H1 (cell line): ENCODE measurements at regions of chr4 and their contacts with region 1.

Region 1: DNA sequence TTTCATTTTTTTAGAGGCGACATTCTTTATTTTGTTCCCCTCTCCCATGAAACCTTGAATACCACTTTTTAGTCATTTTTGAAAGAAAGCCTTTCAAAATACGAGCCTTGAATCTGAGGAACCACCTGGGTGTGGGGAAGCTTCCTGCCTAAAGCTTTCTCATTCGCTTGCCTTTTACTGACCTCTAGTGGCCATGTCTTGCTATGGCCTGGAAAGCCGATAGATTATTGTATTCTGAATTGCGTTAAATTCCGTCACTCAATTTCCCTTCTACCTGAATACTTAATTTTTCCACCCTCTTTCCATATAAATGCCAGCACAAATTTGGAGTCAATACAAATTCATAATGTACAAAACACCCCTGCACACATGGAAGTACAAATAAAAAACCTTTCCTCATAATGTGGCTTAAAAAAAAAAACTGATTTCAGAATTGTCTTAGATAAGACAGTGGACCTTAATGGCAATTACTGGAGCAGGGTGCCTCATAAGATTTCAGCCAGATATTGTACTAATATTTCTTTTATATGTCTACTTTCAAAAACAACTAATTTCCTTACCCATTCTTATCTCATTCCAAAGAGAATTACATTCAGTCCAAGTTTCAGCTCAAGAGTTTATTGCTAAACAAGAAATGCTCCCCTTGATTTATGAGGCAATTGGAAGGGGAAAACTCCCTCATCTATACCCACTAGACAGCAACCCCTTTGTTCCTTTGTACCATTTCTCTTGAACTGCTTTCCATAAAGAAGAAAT is 217.9 kb downstream of the CENPC start:
- DNase-seq: peak; percentile 7 to 64
- H3K4me3 ChIP-seq: no peak overlapping the region
- H3K27ac ChIP-seq: no peak overlapping the region
- H3K4me1 ChIP-seq: no peaks in the 10 kb centered on the region; a peak in 1 of 7 replicates
- H3K27me3 ChIP-seq: no peaks in the 10 kb centered on the region
- CTCF ChIP-seq: peak in 2 of 3 experiments; percentile 80 to 85; a peak in 3 of 4 replicates
- EP300 ChIP-seq: no peak
- POLR2A ChIP-seq: no peak
- RAD21 ChIP-seq: peak; percentile 97

Region 2: GRCh38 chr4:67342291-67342690 is 14.9 kb after region 1 on chr4:
- CTCF ChIA-PET with region 1: interaction called, 12 read pairs
- POLR2A ChIA-PET with region 1: no interaction called
- DNase-seq: no peak
- H3K4me3 ChIP-seq: no peak overlapping the region
- H3K27ac ChIP-seq: no peak overlapping the region
- H3K4me1 ChIP-seq: no peaks in the 10 kb centered on the region
- H3K27me3 ChIP-seq: no peaks in the 10 kb centered on the region
- CTCF ChIP-seq: no peak
- EP300 ChIP-seq: no peak
- POLR2A ChIP-seq: no peak
- RAD21 ChIP-seq: no peak